ENCODE measurements at regions of chr2 and their contacts with region 1.

Region 1: GRCh38 chr2:217756375-217757107 is 246.3 kb downstream of the TNS1 start:
- DNase-seq: peak; percentile 80
- H3K4me3 ChIP-seq: no peak overlapping the region
- H3K27ac ChIP-seq: no peak overlapping the region
- H3K4me1 ChIP-seq: no peaks in the 10 kb centered on the region
- H3K27me3 ChIP-seq: no peaks in the 10 kb centered on the region
- CTCF ChIP-seq: peak; percentile 92

Region 2: DNA sequence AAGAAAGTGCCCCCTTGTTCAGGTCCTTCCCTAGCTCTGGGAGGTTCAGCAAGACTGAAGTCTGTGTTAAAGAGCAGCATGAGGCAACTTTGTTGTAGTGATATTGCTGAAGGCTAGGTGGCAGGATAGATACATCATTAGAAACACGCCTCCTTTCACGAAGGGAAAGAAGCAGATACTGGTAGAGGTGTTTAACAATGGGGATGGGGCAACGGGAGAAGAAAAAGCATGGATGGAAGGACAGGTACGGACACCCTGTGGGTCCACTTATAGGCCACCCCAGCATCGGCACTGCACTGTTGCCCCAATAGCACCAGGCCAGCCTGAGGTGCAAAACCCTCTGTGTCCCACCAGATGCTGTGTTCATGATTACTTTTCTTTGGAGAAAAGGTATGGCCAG is 1057.6 kb before region 1 on chr2:
- CTCF ChIA-PET with region 1: no interaction called
- POLR2A ChIA-PET with region 1: no interaction called
- intact Hi-C with region 1: loop called (anchors 5 kb)
- DNase-seq: peak; percentile 76
- H3K4me3 ChIP-seq: no peak overlapping the region
- H3K27ac ChIP-seq: no peak overlapping the region
- H3K4me1 ChIP-seq: peaks cover 44% of the 10 kb centered on the region
- H3K27me3 ChIP-seq: no peaks in the 10 kb centered on the region
- CTCF ChIP-seq: peak; percentile 81

Region 3: GRCh38 chr2:217527590-217528202 is 228.8 kb before region 1 on chr2:
- CTCF ChIA-PET with region 1: no interaction called
- POLR2A ChIA-PET with region 1: no interaction called
- intact Hi-C with region 1: no loop called
- DNase-seq: no peak
- H3K4me3 ChIP-seq: no peak overlapping the region
- H3K27ac ChIP-seq: no peak overlapping the region
- H3K4me1 ChIP-seq: no peaks in the 10 kb centered on the region
- H3K27me3 ChIP-seq: no peaks in the 10 kb centered on the region
- CTCF ChIP-seq: no peak

Region 4: DNA sequence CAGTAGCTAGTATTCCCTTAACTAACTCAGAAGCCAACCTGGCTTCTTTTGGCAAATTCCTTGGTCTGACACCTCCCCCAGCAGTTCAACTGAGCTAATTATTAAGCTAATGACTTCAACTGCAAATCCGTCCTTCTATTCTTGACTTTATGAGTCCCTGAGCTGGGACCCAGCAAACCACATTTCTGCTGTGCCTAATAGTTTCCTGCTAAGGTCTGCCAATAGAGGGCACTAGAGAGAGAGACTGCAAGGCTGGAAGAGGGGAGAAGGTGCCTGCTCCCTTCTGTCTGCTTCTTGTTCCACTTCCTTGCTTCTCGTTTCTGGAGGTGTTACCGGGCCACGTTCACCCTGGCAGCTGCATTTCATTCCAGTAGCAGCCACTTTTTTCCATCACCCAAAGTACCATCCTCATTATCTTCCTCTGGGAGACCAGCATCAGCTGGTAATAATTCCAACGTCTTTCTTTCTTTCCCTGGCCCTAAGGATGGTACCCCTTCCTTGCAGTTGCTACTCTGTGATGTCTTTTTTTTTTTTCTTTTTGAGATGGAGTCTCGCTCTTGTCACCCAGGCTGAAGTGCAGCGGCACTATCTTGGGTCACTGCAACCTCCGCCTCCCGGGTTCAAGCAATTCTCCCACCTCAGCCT is 105.7 kb before region 1 on chr2:
- CTCF ChIA-PET with region 1: interaction called, 5 read pairs
- POLR2A ChIA-PET with region 1: no interaction called
- intact Hi-C with region 1: loop called (anchors 5 kb)
- DNase-seq: peak; percentile 74
- H3K4me3 ChIP-seq: no peak overlapping the region
- H3K27ac ChIP-seq: no peak overlapping the region
- H3K4me1 ChIP-seq: peaks cover 8% of the 10 kb centered on the region
- H3K27me3 ChIP-seq: no peaks in the 10 kb centered on the region
- CTCF ChIP-seq: peak; percentile 86

Region 5: GRCh38 chr2:217851191-217852020 is 94.9 kb after region 1 on chr2:
- CTCF ChIA-PET with region 1: no interaction called
- POLR2A ChIA-PET with region 1: no interaction called
- intact Hi-C with region 1: no loop called
- DNase-seq: no peak
- H3K4me3 ChIP-seq: no peak overlapping the region
- H3K27ac ChIP-seq: no peak overlapping the region
- H3K4me1 ChIP-seq: peaks cover 7% of the 10 kb centered on the region
- H3K27me3 ChIP-seq: no peaks in the 10 kb centered on the region
- CTCF ChIP-seq: no peak

Region 6: GRCh38 chr2:218218268-218219185 is 462.0 kb after region 1 on chr2:
- CTCF ChIA-PET with region 1: no interaction called
- POLR2A ChIA-PET with region 1: no interaction called
- intact Hi-C with region 1: no loop called
- DNase-seq: peak; percentile 10
- H3K4me3 ChIP-seq: peak overlapping the region; percentile 86
- H3K27ac ChIP-seq: peak overlapping the region; percentile 87
- H3K4me1 ChIP-seq: peaks cover 47% of the 10 kb centered on the region
- H3K27me3 ChIP-seq: no peaks in the 10 kb centered on the region
- CTCF ChIP-seq: no peak

Measured in A673 (cell line).